ENCODE measurements at regions of chr12 and their contacts with region 1.

Region 1: DNA sequence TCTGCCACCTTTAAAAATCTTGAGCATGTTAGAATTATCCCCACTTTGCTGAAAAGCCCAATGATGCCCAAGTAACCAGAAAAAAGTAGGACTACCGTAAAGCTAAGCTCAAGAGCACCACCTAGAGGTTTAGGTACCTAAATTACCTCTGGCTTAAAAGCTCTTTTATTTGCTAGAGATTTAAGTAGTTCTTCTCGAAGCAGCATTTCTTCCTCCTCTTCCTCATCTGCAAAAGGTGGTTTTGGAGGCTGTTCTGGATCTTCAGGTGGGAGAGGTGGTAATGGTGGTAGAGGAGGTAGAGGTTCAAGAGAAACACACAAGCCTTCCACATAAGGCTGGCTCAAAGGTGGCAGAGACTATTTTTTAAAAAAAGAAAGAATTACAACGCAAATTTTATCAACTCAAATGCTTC is 26.9 kb downstream of the ZFC3H1 start:
- DNase-seq: no peak
- H3K4me3 Mint-ChIP-seq: no peak overlapping the region
- H3K27ac Mint-ChIP-seq: peak overlapping the region; percentile 46
- H3K4me1 Mint-ChIP-seq: peaks cover 28% of the 10 kb centered on the region
- H3K27me3 Mint-ChIP-seq: no peaks in the 10 kb centered on the region

Region 2: GRCh38 chr12:71415336-71416231 is 221.1 kb before region 1 on chr12:
- CTCF ChIA-PET with region 1: interaction called, 8 read pairs
- POLR2A ChIA-PET with region 1: no interaction called
- intact Hi-C with region 1: loop called (anchors 10 kb)
- DNase-seq: peak; percentile 16
- H3K4me3 Mint-ChIP-seq: no peak overlapping the region
- H3K27ac Mint-ChIP-seq: no peak overlapping the region
- H3K4me1 Mint-ChIP-seq: no peaks in the 10 kb centered on the region
- H3K27me3 Mint-ChIP-seq: no peaks in the 10 kb centered on the region

Region 3: DNA sequence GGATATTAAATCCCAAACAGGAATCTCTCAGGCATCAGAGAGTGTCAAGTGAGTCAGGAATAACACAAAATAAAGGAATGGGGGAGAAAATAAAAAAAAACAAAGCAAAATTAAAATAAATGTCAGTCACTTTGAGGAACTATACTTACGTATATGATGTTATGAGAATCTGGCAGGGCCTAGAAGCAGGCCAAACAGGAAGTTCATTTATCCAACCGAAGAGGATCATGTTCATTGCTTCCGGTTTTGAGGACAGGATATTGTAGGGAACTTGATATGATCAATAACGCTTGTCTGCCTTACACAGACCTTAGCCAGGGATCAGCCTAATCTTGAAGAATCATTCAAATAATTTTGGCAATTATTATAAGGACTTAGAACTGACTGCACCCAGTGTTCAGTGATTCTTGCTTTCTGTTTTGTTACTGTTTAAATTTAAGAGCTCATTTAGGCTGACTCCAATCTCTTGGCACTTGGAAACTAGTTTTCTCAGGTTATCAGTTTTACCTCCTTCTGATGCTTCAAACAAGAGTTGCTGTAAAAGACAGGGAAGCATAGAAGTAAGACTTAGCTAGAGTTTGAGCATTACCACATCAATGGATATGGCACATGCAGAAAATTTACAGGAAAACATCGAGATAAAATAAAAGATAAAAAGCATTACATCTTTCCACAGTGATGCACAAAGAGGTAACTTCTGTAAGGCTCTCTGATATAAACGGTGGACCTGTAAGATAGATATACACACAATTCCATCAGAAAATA is 26.5 kb before region 1 on chr12:
- CTCF ChIA-PET with region 1: interaction called, 19 read pairs
- POLR2A ChIA-PET with region 1: interaction called, 3 read pairs
- intact Hi-C with region 1: no loop called
- DNase-seq: no peak
- H3K4me3 Mint-ChIP-seq: no peak overlapping the region
- H3K27ac Mint-ChIP-seq: peak overlapping the region; percentile 79
- H3K4me1 Mint-ChIP-seq: peaks cover 17% of the 10 kb centered on the region
- H3K27me3 Mint-ChIP-seq: no peaks in the 10 kb centered on the region

Region 4: GRCh38 chr12:71626098-71626497 is 10.6 kb before region 1 on chr12:
- CTCF ChIA-PET with region 1: interaction called, 29 read pairs
- POLR2A ChIA-PET with region 1: no interaction called
- intact Hi-C with region 1: no loop called
- DNase-seq: no peak
- H3K4me3 Mint-ChIP-seq: no peak overlapping the region
- H3K27ac Mint-ChIP-seq: peak overlapping the region; percentile 33
- H3K4me1 Mint-ChIP-seq: peaks cover 10% of the 10 kb centered on the region
- H3K27me3 Mint-ChIP-seq: no peaks in the 10 kb centered on the region

Region 5: GRCh38 chr12:71685914-71686665 is 49.4 kb after region 1 on chr12 and contains the start of gene TMEM19:
- CTCF ChIA-PET with region 1: interaction called, 14 read pairs
- POLR2A ChIA-PET with region 1: interaction called, 4 read pairs
- intact Hi-C with region 1: no loop called
- DNase-seq: peak; percentile 87
- H3K4me3 Mint-ChIP-seq: peak within 1 kb of the TSS; percentile 96
- H3K27ac Mint-ChIP-seq: peak within 1 kb of the TSS; percentile 92
- H3K4me1 Mint-ChIP-seq: peaks cover 16% of the 10 kb centered on the region
- H3K27me3 Mint-ChIP-seq: no peaks in the 10 kb centered on the region
- total RNA-seq, gene TMEM19: 10.8 to 11.7 TPM

Measured in activated CD4-positive, alpha-beta memory T cell treated with anti-CD3 and anti-CD28 coated beads for 36 hours (primary cell).